GM10248 (cell line): ENCODE measurements at regions of chr17 and their contacts with region 1.

Region 1: DNA sequence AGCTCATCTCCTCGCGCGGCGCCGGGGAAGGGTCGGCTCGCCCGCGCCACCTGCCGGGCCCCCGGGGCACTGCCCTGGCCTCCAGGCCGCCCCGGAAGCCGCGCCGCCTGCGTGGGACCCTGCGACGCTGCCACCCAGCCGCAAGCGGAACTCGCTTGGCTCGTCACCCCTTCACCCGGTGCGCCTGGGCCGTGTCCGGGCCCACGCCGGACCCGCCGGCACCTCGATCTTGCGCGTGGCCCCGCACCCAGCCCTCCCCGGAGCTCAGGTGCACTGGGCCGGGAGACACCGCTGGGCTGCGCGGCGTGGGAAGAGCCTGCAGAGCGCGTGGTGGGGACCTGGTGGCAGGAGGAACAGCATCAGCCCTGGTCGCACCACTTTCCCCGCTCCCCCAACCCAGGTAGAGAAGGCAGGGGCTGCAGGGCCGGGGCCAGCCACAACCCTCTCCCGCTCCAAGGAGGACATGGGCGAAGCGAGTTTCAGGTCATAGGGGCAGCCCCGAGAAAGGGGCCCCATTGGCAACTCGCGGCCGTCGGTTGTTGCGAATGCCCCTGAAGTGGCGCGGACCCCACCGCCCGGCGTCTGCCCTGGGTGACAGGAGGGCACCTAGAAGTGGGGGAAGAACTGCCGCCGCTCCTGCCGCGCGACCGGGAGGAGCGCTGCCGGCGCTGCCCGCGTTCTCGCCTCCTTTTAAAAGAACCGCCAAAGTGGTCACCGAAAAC is 363 bp upstream of the MIF4GD start:
- DNase-seq: peak; percentile 96
- CTCF ChIP-seq: peak; percentile 96

Region 2: GRCh38 chr17:74430706-74431567 is 840.5 kb before region 1 on chr17:
- CTCF ChIA-PET with region 1: no interaction called
- POLR2A ChIA-PET with region 1: no interaction called
- DNase-seq: peak; percentile 71
- CTCF ChIP-seq: no peak

Region 3: GRCh38 chr17:75173526-75173925 is 97.9 kb before region 1 on chr17:
- CTCF ChIA-PET with region 1: interaction called, 14 read pairs
- POLR2A ChIA-PET with region 1: no interaction called
- DNase-seq: no peak
- CTCF ChIP-seq: no peak

Region 4: DNA sequence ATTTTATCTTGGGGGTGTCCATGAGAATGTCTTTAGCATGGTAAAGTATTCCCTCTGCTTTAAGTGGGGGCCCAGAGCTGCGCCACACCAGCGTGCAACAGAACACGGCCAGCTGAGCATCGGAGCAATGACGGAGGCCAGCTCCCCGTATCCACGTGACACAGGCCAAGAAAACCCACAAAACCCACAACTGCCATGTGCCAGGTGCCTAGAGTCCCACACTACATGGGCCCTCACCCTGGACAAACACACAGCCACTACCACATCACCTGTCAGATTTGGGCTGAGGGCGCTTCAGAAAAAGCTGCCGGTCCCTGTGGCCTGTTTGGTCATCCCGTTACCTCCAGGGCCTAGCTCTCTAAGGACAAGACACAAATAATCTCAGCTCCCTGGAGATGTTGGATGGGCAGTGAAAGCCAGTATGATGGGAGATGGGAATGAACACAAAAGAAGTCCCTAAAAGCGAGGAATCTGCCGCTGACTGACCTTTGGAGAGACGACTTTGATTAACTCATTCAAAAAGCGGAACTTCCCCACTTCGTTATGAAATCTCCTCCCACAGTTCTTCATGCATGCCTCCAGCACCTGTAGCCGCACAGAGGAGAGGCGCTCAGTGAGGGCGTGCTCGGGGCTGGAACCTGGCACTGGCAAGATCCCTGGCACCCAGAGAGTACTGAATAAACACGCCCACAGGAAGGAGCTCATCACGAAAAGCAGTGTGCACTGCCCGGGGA is 27.1 kb before region 1 on chr17:
- CTCF ChIA-PET with region 1: interaction called, 15 read pairs
- POLR2A ChIA-PET with region 1: interaction called, 7 read pairs
- DNase-seq: peak; percentile 56
- CTCF ChIP-seq: no peak

Region 5: GRCh38 chr17:75393523-75394331 is 122.3 kb after region 1 on chr17:
- CTCF ChIA-PET with region 1: interaction called, 13 read pairs
- POLR2A ChIA-PET with region 1: interaction called, 3 read pairs
- DNase-seq: peak; percentile 91
- CTCF ChIP-seq: no peak

Region 6: DNA sequence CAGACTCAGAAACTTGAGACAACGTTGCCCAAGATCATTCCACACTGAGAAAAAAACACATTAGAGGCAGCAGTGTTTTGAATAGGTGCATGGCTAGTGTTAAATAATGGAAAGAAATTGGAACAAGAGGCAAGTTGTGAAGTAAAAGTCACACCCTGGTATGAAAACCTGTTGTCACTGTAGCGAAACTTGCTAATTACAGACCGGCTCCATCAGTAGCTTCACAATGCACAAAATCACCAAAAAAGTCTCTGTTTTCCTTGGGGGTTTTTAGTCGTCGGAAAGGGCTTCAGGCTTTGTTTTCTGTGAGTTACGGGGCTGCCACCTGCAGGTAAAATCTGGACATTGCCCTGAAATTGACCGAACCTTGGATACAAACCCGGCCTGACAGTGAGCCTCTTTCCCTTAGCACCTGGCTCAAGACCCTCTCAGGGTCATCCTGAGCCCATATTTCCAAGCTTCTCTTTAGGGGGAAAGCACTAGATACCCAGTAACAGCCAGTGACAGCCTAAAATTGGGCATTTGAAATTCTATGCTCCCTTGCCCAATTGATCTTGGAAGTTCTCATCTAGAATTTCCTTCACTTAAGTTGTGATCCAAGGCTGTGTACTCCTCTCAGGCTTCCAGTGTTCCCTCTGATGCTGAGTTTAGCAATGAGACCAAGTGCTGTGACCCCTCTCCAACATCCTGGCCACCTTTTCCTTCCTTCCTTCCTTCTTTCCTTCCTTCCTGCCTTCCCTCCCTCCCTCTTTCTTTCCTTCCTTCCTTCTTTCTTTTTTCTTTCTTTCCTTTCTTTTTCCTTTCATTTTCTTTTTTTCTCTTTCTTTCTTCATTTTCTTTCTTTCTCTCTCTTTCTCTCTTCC is 141.3 kb after region 1 on chr17:
- CTCF ChIA-PET with region 1: interaction called, 34 read pairs
- POLR2A ChIA-PET with region 1: interaction called, 10 read pairs
- DNase-seq: peak; percentile 77
- CTCF ChIP-seq: peak; percentile 65